Left ventricle myocardium inferior (tissue), 1 donor: ENCODE measurements at regions of chr5 and their contacts with region 1.

Region 1: GRCh38 chr5:148179234-148179824 is 11.0 kb downstream of the SPINK14 start:
- DNase-seq: no peak
- H3K4me3 ChIP-seq: no peak overlapping the region
- H3K27ac ChIP-seq: no peak overlapping the region
- H3K4me1 ChIP-seq: no peaks in the 10 kb centered on the region
- H3K27me3 ChIP-seq: no peaks in the 10 kb centered on the region
- CTCF ChIP-seq: peak; percentile 84

Region 2: DNA sequence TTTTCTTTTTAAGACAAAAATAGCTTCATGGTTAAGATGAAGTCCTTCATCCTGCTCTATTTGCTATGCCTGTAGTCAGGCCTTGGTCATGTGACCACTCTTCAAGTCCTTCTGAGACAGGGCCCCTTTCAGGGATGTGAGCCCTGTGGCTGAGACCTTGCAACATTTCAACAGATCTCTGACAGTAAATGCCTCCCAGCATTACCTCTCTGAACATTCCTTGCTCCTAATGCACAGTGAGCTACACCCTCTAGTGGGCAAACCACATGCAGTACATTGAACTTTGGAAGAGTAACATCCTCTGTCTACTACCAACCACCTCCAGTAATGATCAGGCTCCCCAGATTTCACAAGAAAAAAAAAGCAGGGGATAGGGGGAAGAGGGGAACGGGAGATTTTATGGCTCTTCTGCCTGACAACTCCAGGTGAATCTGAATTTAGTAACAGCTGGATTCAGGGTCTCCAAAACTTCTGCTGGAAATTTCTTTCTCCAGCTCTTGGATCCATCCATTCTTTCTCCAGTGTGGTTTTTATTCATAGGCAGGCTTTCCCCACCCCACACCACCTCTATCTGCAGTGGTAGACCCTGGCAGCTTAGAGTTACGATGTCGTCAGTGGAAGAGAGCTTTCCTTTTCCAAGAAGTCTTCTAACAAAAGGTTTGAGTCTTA is 195.5 kb after region 1 on chr5:
- intact Hi-C with region 1: loop called (anchors 5 kb)
- DNase-seq: no peak
- H3K4me3 ChIP-seq: no peak overlapping the region
- H3K27ac ChIP-seq: no peak overlapping the region
- H3K4me1 ChIP-seq: peaks cover 30% of the 10 kb centered on the region
- H3K27me3 ChIP-seq: no peaks in the 10 kb centered on the region
- CTCF ChIP-seq: peak; percentile 67